MCF 10A (cell line): ENCODE measurements at regions of chr3 and their contacts with region 1.

Region 1: DNA sequence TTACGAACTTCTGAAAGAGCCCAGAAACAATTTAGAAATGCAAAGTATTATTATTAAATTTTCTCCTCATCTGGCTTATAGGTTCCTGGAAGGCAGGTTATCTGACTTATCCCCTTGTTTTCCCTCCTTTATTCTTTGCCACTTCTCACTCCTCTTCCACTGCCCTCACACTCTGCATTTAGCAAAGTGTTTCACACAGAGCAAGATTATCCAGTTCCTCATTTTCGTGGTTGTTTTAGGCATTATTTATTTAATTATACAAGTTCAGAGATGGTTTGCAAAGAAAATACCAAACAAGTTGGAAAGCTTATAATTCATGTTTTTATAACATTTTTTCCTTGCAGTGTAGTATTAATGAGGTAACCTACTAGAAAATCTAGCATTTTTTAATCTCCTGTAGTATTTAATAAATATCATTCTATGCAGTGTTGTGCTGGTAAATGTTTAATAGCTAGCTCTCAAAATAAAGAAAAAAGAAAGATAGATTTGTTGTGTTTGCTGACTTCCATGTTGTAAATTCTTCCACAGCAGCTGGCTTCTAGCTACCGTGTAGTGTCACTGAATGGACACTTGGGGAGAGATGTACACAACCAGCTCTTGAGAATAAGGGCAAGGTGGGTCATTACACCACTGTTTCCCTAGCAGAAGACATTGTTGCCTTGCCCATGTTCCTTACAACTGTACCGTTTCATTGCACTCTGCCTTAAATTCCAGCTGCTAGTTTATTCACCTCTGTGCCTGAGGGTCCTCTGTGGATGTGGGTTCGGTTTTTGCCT is 545.1 kb downstream of the NSUN3 start:
- DNase-seq: no peak
- H3K4me3 Mint-ChIP-seq: no peak overlapping the region
- H3K27ac Mint-ChIP-seq: no peak overlapping the region
- H3K4me1 Mint-ChIP-seq: no peaks in the 10 kb centered on the region
- H3K27me3 Mint-ChIP-seq: peaks cover 6% of the 10 kb centered on the region
- CTCF ChIP-seq: no peak

Region 2: GRCh38 chr3:94548581-94549316 is 59.2 kb before region 1 on chr3:
- CTCF ChIA-PET with region 1: no interaction called
- POLR2A ChIA-PET with region 1: no interaction called
- intact Hi-C with region 1: loop called (anchors 10 kb)
- DNase-seq: peak; percentile 5
- H3K4me3 Mint-ChIP-seq: no peak overlapping the region
- H3K27ac Mint-ChIP-seq: no peak overlapping the region
- H3K4me1 Mint-ChIP-seq: no peaks in the 10 kb centered on the region
- H3K27me3 Mint-ChIP-seq: no peaks in the 10 kb centered on the region
- CTCF ChIP-seq: no peak

Region 3: GRCh38 chr3:95036526-95037021 is 428.6 kb after region 1 on chr3:
- CTCF ChIA-PET with region 1: no interaction called
- POLR2A ChIA-PET with region 1: no interaction called
- intact Hi-C with region 1: no loop called
- DNase-seq: no peak
- H3K4me3 Mint-ChIP-seq: no peak overlapping the region
- H3K27ac Mint-ChIP-seq: no peak overlapping the region
- H3K4me1 Mint-ChIP-seq: no peaks in the 10 kb centered on the region
- H3K27me3 Mint-ChIP-seq: peaks cover 47% of the 10 kb centered on the region
- CTCF ChIP-seq: no peak